ENCODE measurements at regions of chr19 and their contacts with region 1.

Region 1: DNA sequence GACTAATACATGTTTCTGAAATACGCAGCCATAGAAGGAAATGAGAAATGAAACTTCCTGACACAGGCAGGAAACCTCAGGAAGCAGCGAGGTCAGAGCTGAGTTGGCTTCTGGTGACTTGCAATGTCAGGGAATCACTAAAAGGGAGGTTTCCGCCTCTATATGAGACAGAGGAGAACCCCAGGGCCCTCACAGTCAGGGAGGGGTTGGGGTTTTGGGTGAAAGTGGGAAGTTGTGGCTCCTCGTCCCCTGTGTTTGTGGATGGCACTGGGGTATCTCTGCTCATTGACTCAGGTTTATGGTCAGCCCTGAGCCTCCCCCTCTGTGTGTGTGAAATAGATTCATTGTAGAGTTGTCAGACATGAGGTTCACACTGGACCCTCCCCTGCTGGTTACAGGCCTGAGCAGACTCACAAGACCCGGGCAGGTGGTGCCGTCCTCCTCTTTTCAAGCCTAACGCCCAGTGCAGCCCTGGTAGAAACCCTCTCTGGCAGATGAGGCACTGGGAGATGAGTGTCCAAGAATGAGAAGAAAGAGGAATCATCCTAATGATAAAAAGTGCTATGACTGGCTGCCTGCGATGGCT is 5.5 kb upstream of the LILRA6 start:
- DNase-seq: peak; percentile 77
- H3K4me3 Mint-ChIP-seq: peak overlapping the region; percentile 14
- H3K27ac Mint-ChIP-seq: no peak overlapping the region
- H3K4me1 Mint-ChIP-seq: peaks cover 12% of the 10 kb centered on the region
- H3K27me3 Mint-ChIP-seq: no peaks in the 10 kb centered on the region

Region 2: DNA sequence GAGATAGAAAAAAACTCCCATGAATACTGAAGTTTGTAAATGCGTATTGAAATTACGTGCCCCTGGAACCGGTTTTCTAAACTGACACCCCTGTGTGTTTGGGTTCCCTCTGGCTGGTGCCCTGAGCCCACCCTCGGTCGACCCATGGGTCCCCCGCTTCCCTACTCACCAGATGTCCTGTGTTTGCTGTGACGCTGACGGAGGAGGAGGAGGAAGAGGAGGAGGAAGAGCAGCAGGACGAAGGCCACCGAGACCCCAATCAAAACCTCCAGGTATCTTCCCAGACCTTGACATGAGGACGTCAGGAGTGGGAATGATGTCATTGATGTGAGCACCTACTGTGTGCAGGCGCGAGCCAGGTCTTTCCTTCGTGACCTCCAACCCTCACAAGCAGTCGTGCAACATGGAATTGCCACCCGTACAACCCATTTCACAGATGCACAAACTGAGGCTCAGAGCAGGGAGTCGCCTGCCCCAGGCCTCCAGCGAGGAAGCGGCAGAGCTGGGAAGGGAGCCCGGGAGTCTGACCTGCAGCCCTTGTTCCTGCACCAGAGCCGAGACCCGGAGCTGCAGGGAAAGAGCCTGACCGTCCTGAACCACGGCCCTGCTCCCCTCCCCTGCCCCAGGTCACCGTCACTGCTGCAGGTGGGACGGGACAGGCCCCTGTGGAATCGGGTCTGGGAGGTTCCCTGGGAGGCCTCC is 29.0 kb before region 1 on chr19:
- CTCF ChIA-PET with region 1: no interaction called
- intact Hi-C with region 1: loop called (anchors 2 kb)
- DNase-seq: no peak
- H3K4me3 Mint-ChIP-seq: no peak overlapping the region
- H3K27ac Mint-ChIP-seq: no peak overlapping the region
- H3K4me1 Mint-ChIP-seq: peaks cover 8% of the 10 kb centered on the region
- H3K27me3 Mint-ChIP-seq: peaks cover 5% of the 10 kb centered on the region

Region 3: DNA sequence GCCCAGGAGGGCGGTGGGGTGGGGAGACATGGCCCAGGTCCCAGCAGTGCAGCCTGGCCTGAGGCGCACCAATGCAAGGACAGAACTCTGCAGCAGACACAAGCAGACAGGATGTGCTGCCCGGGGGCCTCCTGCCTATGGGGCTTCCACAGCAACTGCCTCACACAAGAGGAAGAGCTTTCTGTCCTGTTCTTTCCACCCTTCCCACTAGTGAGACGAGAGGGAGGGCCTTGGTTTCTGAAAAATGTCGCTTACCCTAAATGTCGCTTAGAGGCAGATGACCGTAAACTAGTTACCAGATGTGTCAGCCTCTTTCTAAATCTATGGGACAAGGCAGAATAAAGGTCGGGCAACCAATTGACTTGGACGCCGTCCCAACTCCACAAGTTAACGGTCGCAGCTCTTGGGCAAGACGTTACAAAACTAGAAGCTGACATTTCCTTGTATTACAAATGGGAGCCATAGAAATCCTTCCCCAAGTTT is 116.7 kb after region 1 on chr19 and contains the start of gene LAIR1:
- CTCF ChIA-PET with region 1: no interaction called
- intact Hi-C with region 1: loop called (anchors 5 kb)
- DNase-seq: peak; percentile 79
- H3K4me3 Mint-ChIP-seq: peak within 1 kb of the TSS; percentile 89
- H3K27ac Mint-ChIP-seq: peak within 1 kb of the TSS; percentile 91
- H3K4me1 Mint-ChIP-seq: peaks cover 67% of the 10 kb centered on the region
- H3K27me3 Mint-ChIP-seq: peaks cover 8% of the 10 kb centered on the region
- total RNA-seq, gene LAIR1: 5.2 to 5.7 TPM

Region 4: DNA sequence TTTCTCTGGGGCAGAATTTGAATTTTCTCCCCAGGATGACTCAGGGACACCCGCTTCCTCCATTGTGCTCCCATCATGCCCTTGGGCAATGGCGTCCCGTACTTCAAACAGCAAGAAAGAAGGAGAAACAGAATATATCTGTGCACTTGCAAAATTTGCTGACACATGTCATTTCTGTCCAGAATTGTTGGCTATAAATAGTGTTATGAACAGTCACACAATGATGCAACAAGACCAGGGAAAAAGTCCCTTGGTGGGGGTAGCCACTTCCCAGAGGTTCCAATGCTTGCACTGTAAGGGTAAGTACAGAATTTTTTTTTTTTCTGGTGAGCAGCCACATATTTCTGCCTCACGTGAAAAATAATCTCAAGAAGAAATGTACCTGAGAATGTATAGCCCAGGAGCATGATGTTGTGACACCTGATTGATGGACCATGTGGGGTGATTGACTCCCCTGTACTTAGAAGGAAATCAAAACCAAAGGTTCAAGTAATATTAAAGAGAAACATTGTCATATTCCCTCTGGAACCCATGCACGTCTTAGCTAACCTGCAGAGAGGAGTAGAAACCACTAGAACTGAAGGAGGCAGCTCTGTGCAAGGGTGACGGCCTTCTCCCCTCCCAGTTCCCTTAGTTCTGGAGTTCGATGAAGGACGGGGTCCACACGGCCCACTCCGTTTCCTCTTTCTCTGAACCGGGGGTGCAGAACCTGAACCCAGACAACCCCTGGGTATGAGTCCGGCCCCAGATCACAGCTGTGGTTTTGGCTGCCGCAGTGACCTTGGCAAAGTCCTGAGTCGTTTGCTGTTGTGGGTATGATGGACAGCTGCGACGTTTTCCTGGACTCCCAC is 125.9 kb after region 1 on chr19:
- CTCF ChIA-PET with region 1: no interaction called
- intact Hi-C with region 1: loop called (anchors 5 kb)
- DNase-seq: no peak
- H3K4me3 Mint-ChIP-seq: no peak overlapping the region
- H3K27ac Mint-ChIP-seq: no peak overlapping the region
- H3K4me1 Mint-ChIP-seq: peaks cover 75% of the 10 kb centered on the region
- H3K27me3 Mint-ChIP-seq: peaks cover 33% of the 10 kb centered on the region